GM10248 (cell line): ENCODE measurements at regions of chr10 and their contacts with region 1.

Region 1: DNA sequence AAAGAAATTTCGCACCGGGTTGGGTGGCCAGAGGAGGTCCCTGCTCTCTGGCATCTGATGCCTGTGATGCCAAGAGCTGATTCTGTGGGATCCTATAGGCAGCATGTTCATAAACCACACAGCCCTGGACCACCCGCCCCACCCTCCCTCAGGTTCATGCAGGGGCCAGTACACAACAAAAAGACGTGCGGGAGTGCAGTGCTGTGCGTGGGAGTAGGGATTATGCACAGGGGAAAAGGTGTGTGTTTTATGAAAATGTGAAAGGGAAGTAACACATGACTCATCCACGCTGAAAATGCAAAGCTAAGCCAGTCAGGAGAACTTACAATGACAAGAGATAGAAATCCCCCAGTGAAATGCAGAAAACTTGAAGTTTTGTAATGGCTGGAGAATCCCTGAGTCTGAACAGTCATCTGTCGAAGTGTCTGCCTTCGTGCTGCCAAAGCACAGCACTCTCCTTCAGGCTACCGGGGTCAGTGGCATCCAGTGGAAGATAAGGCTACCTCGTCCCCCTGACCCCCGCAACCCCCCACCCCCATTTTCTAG is 1.1 kb downstream of the KIAA1217 start:
- DNase-seq: peak; percentile 78
- CTCF ChIP-seq: no peak

Region 2: DNA sequence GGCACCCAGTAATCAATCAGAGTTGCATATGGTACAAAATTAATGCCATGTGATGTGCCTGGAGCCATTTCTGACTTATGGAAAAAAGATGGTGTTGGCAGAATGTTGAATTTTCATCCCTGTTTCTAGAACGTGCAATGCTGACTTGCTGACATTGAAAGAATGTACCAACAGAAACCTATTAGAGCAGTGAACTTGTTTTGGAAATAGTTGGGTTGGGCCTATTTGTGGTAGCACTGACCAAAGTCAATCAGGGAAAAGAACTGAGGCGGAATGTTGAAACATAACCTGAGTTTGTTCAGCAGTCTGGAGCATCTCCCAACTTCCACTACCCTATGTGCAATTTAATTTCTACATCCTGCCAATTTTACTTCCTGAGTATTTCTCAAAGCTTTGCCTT is 12.8 kb before region 1 on chr10:
- CTCF ChIA-PET with region 1: interaction called, 14 read pairs
- POLR2A ChIA-PET with region 1: interaction called, 5 read pairs
- DNase-seq: no peak
- CTCF ChIP-seq: no peak